ENCODE measurements at regions of chr22 and their contacts with region 1.

Region 1: GRCh38 chr22:31970490-31971444 is 26.4 kb downstream of the YWHAH start:
- DNase-seq: no peak
- H3K4me3 ChIP-seq: peak overlapping the region; percentile 23 to 67 (median 44)
- H3K27ac ChIP-seq: peak overlapping the region in 2 of 4 donors; percentile 3 to 21
- H3K4me1 ChIP-seq: peaks cover 7 to 18% (median 9%) of the 10 kb centered on the region in 3 donors
- H3K27me3 ChIP-seq: no peaks in the 10 kb centered on the region
- CTCF ChIP-seq: peak; percentile 87 to 94 (median 92)
- POLR2A ChIP-seq: no peak

Region 2: GRCh38 chr22:31926969-31927368 is 43.8 kb before region 1 on chr22:
- intact Hi-C with region 1: no loop called
- DNase-seq: no peak
- H3K4me3 ChIP-seq: no peak overlapping the region
- H3K27ac ChIP-seq: no peak overlapping the region
- H3K4me1 ChIP-seq: no peaks in the 10 kb centered on the region
- H3K27me3 ChIP-seq: peaks cover 0 to 10% (median 0%) of the 10 kb centered on the region in 4 donors
- CTCF ChIP-seq: no peak
- POLR2A ChIP-seq: no peak

Region 3: DNA sequence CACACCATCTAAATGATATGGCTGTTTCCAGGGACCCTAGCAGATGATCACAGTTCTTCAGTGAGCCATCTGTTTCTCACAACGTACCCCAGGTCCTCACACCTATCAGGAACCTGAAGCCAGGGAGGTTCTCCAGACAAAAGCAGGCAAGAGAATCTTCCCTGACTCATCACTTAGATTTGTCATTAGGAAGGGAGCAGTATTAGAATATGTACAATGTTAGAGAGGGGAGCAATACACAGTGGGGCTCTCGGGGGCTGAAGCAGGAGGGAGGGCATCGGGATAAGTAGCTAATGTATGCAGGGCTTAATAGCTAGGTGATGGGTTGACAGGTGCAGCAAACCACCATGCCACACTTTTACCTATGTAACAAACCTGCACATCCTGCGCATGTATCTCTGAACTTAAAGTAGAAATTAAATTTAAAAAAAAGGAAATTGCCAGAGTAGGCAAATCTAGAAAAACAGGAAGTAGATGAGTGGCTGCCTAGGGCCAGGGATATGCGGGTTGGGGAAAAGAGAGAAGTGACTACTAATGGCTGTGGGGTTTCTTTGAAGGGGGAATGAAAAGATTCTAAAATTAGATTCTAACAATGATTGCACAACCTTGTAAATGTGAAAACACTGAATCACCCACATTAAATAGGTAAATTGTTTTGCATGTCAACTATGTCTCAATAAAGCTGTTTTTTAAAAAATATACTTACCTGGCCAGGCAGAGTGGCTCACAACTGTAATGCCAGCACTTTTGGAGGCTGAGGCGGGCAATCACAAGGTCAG is 173.9 kb after region 1 on chr22:
- intact Hi-C with region 1: no loop called
- DNase-seq: no peak
- H3K4me3 ChIP-seq: no peak overlapping the region
- H3K27ac ChIP-seq: no peak overlapping the region
- H3K4me1 ChIP-seq: no peaks in the 10 kb centered on the region
- H3K27me3 ChIP-seq: no peaks in the 10 kb centered on the region
- CTCF ChIP-seq: no peak
- POLR2A ChIP-seq: no peak

Region 4: DNA sequence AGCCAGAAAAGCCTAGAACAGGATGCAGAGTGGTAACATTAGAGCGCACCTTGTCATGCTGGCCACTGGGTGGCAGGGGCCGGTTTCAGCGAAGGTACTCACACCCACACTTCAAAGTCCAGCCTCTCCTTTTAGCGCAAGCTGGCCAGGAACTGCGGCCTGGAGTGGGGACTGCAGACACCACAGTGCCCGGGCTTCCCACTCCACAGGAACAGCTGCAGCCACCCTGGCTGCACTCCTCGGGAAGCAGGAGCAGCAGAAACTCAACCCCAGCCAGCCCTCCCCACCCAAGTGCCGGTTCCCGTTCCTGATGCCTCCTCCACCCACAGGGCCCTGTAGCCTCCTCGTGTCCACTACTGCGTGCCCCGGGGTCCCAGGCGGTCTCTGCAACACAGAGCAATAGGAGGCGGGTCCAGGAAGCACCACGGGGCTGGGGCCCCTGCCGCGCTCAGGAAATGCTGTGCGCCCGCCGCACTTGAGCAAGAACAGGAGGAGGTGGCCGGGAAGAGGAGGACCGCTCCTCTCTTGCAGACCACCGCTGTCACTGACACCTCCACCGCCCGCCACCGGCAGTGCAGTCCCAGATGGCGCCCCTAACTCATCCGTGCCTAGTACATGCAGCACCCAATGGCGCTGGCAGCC is 231.9 kb after region 1 on chr22:
- intact Hi-C with region 1: loop called (anchors 10 kb)
- DNase-seq: no peak
- H3K4me3 ChIP-seq: peak overlapping the region in 3 of 4 donors; percentile 13 to 47 (median 21)
- H3K27ac ChIP-seq: no peak overlapping the region
- H3K4me1 ChIP-seq: peaks cover 9 to 24% (median 12%) of the 10 kb centered on the region in 3 donors
- H3K27me3 ChIP-seq: peaks cover 0 to 75% (median 8%) of the 10 kb centered on the region in 4 donors
- CTCF ChIP-seq: peak in 5 of 6 experiments; percentile 31 to 54 (median 36)
- POLR2A ChIP-seq: no peak

Region 5: DNA sequence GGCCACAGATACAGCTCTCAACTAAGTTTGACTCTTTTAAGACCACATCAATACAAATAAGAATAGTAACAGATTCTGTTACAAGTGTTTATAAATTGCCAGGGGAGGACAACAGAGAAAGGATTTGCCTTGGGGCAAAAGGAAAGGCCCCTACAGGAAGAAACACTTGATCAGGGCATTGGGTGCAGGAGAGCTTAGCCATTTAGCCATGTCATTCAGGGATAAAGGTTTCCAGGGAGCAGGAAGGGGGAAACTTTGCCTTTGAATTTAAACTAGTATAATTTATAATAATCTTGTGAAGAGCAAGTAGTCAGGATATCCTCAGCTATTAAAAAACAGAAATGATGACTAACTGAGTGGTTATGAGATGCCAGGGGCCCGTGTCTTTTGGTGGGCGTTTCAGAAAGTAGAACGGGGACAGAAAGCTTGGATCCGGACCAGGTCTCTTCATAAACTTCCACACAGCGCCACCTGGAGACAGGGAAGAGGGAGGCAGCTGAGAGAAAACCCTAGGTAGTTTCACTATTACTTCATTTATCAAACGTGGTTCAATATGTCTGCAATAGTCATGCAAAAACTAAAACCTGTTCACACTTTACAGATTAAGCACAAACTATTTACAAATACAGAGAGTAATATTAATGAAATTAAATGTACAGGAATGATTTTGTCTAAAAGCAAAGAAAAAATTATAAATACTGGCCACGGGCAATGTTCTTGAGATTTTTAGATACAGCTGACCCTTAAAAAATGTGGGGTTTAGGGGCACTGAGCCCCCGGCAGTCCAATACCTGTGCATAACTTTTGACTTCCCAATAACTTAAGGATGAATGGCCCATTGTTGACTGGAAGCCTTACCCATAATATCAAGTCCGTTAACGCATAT is 295.4 kb after region 1 on chr22:
- intact Hi-C with region 1: loop called (anchors 10 kb)
- DNase-seq: no peak
- H3K4me3 ChIP-seq: no peak overlapping the region
- H3K27ac ChIP-seq: no peak overlapping the region
- H3K4me1 ChIP-seq: peaks cover 0 to 7% (median 0%) of the 10 kb centered on the region in 3 donors
- H3K27me3 ChIP-seq: peaks cover 0 to 2% (median 0%) of the 10 kb centered on the region in 4 donors
- CTCF ChIP-seq: peak; percentile 58 to 77 (median 70)
- POLR2A ChIP-seq: no peak

Region 6: GRCh38 chr22:32311551-32312071 is 340.8 kb after region 1 on chr22:
- intact Hi-C with region 1: no loop called
- DNase-seq: no peak
- H3K4me3 ChIP-seq: no peak overlapping the region
- H3K27ac ChIP-seq: no peak overlapping the region
- H3K4me1 ChIP-seq: no peaks in the 10 kb centered on the region
- H3K27me3 ChIP-seq: peaks cover 0 to 43% (median 0%) of the 10 kb centered on the region in 4 donors
- CTCF ChIP-seq: no peak
- POLR2A ChIP-seq: no peak

Region 7: DNA sequence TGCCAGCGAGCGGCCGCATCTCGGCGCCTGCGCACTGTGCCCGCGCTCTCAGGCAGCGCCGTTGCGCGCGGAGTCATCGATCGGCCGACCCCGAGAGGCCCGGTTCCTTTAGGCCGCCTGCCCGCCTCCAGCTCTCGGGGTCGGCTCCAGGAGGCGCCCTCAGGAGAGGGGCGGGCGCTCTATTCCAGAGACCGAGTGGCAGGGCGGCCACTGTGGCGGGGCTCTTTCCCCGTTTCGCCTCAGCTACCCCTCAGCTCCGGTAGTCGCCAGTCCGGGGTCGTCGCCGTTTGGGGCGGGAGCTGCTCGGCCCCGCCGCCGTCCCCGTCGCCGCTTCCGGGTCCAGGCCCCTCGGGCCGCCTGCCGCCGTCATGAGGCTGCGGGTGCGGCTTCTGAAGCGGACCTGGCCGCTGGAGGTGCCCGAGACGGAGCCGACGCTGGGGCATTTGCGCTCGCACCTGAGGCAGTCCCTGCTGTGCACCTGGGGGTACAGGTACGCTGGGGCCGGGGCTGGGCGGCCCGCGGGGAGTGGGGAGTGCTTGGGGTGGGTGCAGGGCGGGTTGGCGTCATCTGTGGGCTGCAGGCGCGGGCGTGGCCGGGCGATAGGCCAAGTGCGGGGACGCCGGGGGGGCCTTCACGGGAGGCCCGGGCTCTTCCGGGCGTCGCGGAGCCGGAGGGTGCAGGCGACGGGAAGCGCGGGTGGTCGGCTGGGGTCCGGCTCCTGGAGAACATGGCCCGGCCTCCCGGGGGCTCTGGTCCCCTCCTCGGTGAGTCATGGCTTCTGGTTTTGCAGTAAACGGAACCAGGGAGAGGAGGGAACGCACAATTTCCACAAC is 504.1 kb after region 1 on chr22 and contains the start of gene FBXO7:
- intact Hi-C with region 1: loop called (anchors 10 kb)
- DNase-seq: peak; percentile 36
- H3K4me3 ChIP-seq: peak within 1 kb of the TSS; percentile 61 to 99 (median 80)
- H3K27ac ChIP-seq: peak within 1 kb of the TSS; percentile 94 to 99 (median 96)
- H3K4me1 ChIP-seq: peaks cover 9 to 46% (median 15%) of the 10 kb centered on the region in 3 donors
- H3K27me3 ChIP-seq: no peaks in the 10 kb centered on the region
- CTCF ChIP-seq: peak in 5 of 6 experiments; percentile 19 to 53 (median 27)
- POLR2A ChIP-seq: peak in 3 of 4 donors; percentile 58 to 85 (median 82)
- total RNA-seq, gene FBXO7: 31.8 to 67.1 (median 49.6) TPM